ENCODE measurements at regions of chr16 and their contacts with region 1.

Region 1: GRCh38 chr16:8665529-8665928 is 8.9 kb upstream of the ABAT start:
- DNase-seq: no peak
- ATAC-seq: no peak

Region 2: DNA sequence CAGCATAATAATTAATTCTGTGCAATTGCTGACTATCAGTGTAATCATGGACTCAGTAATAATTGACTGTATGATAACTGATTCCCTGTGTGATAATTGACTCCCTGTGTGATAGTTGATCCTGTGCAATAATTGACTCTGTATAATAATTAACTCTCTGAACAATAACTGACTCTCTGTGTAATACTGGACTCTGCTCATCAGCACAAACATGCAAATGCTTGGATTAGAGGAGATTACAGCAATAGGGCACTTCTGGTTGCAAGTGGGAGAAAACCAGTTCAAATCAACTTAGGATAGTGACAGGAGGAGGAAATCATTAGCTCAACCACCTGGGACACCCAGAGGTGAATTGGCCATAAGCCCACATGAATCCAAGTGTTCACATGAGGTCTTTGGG is 750.8 kb before region 1 on chr16:
- intact Hi-C with region 1: no loop called
- DNase-seq: no peak
- ATAC-seq: no peak

Region 3: GRCh38 chr16:8797364-8798173 is 132.0 kb after region 1 on chr16 and contains the starts of genes PMM2 and TMEM186:
- intact Hi-C with region 1: loop called (anchors 5 kb)
- DNase-seq: peak; percentile 97
- ATAC-seq: peak; percentile 100
- total RNA-seq, gene PMM2: 15.3 TPM
- total RNA-seq, gene TMEM186: 13.0 TPM